ENCODE measurements at regions of chr9 and their contacts with region 1.

Region 1: DNA sequence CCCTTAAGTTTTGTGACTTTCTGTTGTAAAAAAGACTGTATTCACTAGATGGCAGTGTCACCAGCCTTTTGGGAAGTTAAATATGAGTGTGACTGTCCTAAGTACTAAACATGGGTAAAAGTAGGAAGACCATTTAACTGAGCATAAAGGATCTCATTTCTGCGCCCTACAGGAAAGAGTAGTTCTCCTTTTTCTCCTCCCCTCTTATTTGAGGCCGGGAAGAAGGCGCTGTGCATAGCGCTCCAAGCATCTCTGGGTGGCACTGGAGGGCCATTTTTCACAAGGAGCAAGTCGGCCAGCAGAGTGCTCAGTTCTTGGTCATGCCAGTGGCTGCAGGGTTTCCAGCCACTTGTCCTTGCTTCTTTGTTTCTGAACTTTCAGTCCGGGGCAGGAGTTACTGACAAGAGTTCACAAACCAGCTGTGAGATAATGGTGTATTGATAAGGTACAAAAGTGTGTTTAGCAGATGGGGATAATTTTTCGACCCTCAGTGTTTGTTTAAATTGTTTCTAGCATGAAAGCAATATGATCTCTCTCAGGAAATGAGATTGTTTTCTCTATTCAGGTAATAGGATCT is 227.6 kb upstream of the DMRT1 start:
- DNase-seq: peak; percentile 85

Region 2: GRCh38 chr9:385818-386398 is 228.0 kb before region 1 on chr9:
- intact Hi-C with region 1: loop called (anchors 5 kb)
- DNase-seq: no peak

Region 3: GRCh38 chr9:567128-567746 is 46.6 kb before region 1 on chr9:
- intact Hi-C with region 1: no loop called
- DNase-seq: no peak

Region 4: GRCh38 chr9:693201-694091 is 79.6 kb after region 1 on chr9:
- intact Hi-C with region 1: loop called (anchors 5 kb)
- DNase-seq: no peak

Region 5: GRCh38 chr9:755454-756381 is 141.9 kb after region 1 on chr9:
- intact Hi-C with region 1: loop called (anchors 2 kb)
- DNase-seq: no peak

Region 6: GRCh38 chr9:806285-807156 is 192.7 kb after region 1 on chr9:
- intact Hi-C with region 1: loop called (anchors 5 kb)
- DNase-seq: no peak

Measured in cardiac septum (tissue), 1 donor.